Colonic mucosa (tissue), 4 donors: ENCODE measurements at regions of chr5 and their contacts with region 1.

Region 1: DNA sequence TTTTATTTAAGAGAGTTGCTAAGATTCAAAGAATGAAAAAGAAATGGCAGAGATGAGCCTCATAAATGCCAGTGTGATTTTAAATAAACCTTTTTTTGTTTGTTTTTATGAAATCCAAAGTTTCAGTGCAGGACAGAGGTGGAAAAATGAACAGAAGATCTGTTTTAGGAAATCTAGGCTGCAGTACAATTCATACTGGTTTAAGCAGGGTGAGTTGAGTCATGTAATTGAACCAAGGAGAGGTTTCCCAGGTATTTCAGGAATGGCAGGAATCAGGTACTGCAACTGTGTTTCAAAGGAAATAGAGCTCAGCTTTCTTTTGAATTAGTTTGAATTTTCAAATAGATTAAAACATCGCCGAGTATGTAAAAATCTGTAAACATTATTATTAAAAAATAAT is 3.0 kb upstream of the ANKRD31 start:
- DNase-seq: no peak
- H3K4me3 ChIP-seq: no peak overlapping the region
- H3K27ac ChIP-seq: no peak overlapping the region
- H3K4me1 ChIP-seq: no peaks in the 10 kb centered on the region
- H3K27me3 ChIP-seq: no peaks in the 10 kb centered on the region
- CTCF ChIP-seq: no peak

Region 2: DNA sequence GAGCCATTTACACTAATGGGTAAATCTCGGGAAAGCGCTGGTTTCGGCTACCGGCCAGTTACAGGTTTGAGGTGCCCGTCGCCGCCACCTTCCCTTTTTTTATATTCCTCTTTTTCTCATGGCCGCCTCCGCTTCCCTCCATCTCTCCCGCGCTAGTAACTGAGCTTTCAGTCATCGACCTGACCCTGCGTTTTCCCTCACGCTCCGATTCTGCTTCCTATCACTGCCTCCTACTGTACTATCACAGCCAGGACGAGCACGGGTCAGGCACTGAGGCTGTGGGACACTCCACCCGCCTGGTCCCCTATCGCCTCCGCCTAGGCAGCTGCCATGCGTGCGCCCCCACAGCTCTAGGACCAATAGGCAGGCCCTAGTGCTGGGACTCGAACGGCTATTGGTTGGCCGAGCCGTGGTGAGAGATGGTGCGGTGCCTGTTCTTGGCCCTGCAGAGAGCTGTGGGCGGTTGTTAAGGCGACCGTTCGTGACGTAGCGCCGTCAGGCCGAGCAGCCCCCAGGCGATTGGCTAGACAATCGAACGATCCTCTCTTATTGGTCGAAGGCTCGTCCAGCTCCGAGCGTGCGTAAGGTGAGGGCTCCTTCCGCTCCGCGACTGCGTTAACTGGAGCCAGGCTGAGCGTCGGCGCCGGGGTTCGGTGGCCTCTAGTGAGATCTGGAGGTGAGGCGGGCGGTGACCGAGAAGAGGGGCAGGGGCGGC is 97.1 kb after region 1 on chr5 and contains the start of gene HMGCR:
- intact Hi-C with region 1: loop called (anchors 5 kb)
- DNase-seq: peak; percentile 98
- H3K4me3 ChIP-seq: peak within 1 kb of the TSS; percentile 63
- H3K27ac ChIP-seq: peak within 1 kb of the TSS; percentile 95
- H3K4me1 ChIP-seq: no peaks in the 10 kb centered on the region
- H3K27me3 ChIP-seq: no peaks in the 10 kb centered on the region
- CTCF ChIP-seq: no peak
- total RNA-seq, gene HMGCR: 118 to 319 TPM

Region 3: GRCh38 chr5:75511435-75512384 is 272.0 kb after region 1 on chr5 and contains the starts of genes CERT1 and POLK:
- intact Hi-C with region 1: no loop called
- DNase-seq: peak; percentile 99
- H3K4me3 ChIP-seq: peak within 1 kb of the TSS; percentile 87
- H3K27ac ChIP-seq: peak within 1 kb of the TSS; percentile 91
- H3K4me1 ChIP-seq: peaks cover 6% of the 10 kb centered on the region
- H3K27me3 ChIP-seq: no peaks in the 10 kb centered on the region
- CTCF ChIP-seq: no peak
- total RNA-seq, gene CERT1: 34.0 to 44.5 TPM
- total RNA-seq, gene POLK: 13.7 to 16.8 TPM